Posterior cingulate gyrus (tissue), 11 donors: ENCODE measurements at regions of chr7 and their contacts with region 1.

Region 1: GRCh38 chr7:92134271-92135051 is at the start of gene CYP51A1:
- DNase-seq: peak; percentile 90 to 99 (median 94)

Region 2: DNA sequence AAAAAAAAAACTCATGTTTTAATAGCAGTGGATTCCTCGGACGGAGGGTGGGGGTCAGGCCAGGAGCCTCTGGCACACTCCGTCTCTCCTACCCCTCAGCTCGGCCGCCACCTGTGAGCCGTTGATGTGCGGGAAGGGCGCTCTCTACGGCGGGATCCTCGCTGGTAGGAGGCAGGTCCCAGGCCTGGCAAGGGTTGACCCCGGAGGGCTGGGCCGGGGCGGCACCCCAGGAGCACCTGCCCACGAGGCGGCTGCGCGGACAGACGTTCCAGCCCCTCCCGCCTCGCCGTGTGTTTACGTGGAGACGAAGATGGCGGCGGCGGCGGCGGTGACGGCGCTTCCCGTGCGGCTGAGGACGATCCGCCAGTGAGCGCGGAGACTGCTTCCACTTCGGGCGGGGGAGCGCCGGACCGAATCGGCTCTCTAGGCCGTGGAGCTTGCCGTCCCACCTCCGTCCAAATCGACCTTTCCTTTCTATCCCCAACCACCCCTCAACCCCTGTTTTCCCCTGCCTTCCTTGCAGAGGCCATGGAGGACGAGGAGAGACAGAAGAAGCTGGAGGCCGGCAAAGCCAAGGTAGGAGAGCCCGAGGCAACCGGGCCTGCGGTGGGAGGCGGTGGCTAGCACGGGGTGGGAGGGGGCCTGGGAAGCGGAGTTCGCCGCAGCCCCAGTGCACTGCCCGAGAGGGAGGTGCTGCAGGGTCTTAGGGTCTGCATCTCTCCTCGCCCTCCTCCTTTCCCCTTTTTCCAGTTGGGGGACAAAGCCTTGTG is 193.7 kb before region 1 on chr7 and contains the start of gene AKAP9:
- intact Hi-C with region 1: loop called (anchors 5 kb)
- DNase-seq: peak; percentile 71 to 98 (median 86)

Region 3: DNA sequence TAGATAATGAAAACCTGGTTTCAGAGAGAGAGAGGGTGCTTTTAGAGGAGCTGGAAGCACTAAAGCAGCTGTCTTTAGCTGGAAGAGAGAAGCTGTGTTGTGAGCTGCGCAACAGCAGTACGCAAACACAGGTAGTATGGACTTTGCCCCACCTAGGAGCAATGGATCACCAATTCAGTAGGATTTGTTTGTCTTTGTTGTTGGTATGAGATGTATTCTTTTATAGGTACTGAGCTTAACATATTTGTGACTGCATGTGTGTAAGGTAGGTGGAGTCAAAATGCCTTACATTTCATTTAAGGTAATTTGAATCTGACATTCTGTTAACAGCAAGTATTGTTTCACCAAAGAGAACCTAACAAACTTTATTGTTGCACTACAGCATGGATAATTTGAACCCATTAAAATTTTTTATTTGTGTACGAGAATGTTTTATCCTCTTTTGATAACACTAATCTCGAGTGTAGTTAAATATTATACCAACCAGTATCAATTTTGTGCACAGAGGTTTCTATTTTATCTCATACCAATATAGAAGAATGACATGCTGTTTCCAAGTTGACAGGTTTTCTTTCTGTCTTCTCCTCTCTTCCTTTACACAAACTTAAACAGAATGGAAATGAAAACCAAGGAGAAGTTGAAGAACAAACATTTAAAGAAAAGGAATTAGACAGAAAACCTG is 92.3 kb before region 1 on chr7:
- intact Hi-C with region 1: no loop called
- DNase-seq: no peak

Region 4: DNA sequence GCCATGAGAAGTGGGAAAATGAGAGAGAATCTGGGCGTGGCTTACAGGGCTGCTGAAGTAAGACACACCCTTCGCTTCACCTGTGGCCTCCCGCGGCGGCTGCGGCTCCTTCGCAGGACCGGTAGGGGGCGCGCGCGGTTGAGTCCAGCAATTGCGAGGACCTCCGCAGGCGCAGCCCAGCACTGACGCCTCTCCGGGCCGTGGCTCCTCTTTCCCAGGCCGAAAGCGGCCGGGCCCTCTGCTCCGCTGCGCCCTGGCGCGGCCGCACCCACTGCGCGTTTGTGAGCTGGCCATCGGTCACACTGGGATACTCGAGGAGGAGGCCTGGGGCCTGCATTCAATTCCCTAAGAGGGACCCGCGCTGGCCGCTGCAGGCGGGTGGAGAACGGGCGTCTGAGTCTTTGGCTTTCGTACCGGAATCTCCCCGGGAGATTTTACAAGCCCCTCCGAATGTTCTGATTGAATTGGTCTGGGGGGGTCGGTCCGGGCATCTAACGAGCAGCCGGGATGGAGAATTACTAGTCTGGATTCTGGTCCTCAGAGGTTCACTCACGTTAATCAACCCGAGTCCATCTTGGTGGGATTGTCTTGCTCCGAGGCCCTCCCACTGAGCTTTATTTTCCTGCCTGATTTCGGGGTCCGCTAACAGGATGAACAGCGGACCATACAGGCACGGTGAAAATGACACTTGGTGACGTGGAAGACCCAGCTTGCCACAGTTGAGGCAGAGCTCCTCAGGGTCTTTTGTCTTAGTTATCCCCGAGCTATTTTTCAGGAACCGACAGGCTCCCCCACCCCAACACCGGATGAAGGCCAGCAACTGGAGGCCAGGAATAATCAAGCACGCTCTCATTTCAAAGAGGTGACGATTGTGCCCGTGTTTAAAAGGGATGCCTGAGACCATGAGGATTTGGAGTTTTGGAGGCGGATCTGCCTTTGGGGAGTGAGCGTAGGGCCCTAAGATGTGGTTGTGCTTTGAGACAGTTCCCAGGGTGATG is 44.8 kb after region 1 on chr7 and contains the start of gene LRRD1:
- intact Hi-C with region 1: loop called (anchors 2 kb)
- DNase-seq: peak; percentile 80 to 98 (median 90)

Region 5: DNA sequence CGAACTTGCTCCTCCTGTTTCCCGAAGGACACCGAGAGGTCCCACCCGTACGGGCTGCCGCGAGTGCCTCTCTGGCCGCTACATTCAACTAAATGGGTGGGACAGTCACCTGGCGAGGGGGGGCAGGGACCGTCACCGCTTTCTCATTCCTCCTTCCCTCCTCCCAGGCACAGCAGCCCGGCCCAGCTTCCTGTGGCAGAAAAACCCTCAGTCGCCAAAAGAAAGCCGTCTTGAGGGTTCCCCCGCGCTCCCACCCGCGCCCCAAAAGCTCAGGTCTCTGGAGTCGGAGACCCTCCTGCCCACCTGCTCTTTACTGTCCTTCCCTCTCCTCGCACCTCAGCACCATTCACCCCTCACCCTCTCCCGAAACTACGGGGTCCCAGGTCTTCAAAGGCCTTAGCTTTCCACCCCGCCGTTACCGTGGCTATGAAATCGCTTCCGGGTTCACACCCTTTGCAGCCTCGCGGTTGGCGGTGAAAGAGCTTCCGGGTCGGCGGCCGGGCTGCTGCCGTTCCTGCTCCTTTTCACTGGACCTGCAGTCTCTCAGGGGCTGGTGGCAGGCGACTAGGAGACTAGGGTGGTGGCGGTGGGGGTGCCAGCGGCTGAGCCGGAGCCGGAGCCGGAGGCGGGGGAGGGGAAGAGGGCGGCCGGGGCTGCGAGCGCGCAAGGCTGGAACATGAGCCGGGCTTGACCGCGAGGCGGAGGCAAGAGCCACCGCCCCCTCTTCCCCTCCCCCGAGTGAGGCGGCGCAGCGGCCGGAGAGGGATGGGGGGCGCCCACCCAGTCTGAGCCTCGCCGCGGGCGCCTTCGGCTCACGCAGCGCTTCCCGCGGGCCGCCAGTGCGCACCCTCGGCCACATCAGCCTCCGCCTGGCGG is 111.3 kb after region 1 on chr7 and contains the starts of genes ANKIB1 and KRIT1:
- intact Hi-C with region 1: loop called (anchors 5 kb)
- DNase-seq: peak; percentile 87 to 99 (median 92)

Region 6: DNA sequence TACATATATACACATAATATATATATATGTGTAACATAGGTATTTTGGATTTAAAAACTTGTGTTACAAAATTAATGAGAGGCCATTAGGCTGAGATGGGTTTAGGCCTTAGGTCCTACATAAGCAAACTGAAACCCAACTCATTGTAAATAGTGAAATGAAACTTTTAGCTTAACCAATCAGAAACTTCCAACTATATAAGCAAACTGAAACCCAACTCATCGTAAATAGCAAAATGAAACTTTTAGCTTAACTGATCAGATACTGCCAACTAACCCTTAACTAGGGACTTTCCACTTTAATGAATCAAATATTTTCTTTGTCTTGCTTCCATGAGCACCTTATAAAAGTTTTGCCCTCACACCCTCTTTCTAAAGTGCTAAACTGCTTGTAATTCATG is 1031.0 kb after region 1 on chr7:
- intact Hi-C with region 1: no loop called
- DNase-seq: no peak